ENCODE measurements at regions of chr4 and their contacts with region 1.

Region 1: DNA sequence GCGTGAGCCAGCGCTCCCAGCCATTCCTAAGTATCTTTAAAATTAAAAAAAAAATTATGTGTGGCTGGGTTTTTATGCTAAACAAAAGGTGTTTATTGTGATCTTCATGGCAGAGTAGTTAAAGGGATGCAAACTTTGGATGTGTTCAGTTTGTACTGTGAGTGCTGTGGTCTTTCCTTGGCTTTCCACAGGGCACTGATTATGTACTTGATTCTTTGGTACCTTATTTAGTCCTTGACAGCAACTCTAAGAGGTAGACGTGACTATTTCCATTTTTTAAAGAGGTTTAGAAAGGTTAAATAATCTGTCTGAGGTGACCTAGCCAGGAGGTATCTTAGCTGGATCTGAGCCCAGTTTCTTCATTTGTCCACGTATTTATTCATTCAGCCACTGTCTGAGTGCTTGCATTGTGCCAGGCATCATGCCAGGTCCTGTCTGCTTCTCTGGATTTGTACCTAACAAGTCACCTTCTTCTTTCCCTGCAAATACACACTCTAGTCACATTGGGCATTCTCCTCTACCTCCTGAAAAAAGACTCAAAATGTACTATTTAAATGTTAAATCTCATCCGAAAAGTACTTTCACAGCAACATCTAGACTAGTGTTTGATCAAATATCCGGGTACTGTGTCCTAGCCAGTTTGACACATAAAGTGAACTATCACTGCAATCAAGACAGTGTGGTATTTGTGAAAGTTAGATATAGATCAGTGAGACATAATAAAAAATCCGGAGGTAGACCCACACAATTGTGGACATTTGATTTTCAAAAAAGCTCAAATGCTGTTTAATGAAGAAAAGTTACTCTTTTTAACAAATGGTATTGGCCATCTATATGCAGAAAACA is 31.5 kb downstream of the WWC2 start:
- DNase-seq: peak; percentile 74
- H3K4me3 ChIP-seq: no peak overlapping the region
- H3K27ac ChIP-seq: peak overlapping the region in 3 of 4 donors; percentile 51 to 70 (median 68)
- H3K4me1 ChIP-seq: peaks cover 0 to 52% (median 33%) of the 10 kb centered on the region in 4 donors
- H3K27me3 ChIP-seq: no peaks in the 10 kb centered on the region
- CTCF ChIP-seq: no peak
- EP300 ChIP-seq: no peak
- POLR2A ChIP-seq: no peak

Region 2: GRCh38 chr4:182826391-182826790 is 304.2 kb before region 1 on chr4:
- intact Hi-C with region 1: no loop called
- DNase-seq: no peak
- H3K4me3 ChIP-seq: no peak overlapping the region
- H3K27ac ChIP-seq: no peak overlapping the region
- H3K4me1 ChIP-seq: no peaks in the 10 kb centered on the region
- H3K27me3 ChIP-seq: no peaks in the 10 kb centered on the region
- CTCF ChIP-seq: no peak
- EP300 ChIP-seq: no peak
- POLR2A ChIP-seq: no peak

Region 3: GRCh38 chr4:183118585-183118984 is 12.0 kb before region 1 on chr4:
- intact Hi-C with region 1: loop called (anchors 1 kb)
- DNase-seq: no peak
- H3K4me3 ChIP-seq: no peak overlapping the region
- H3K27ac ChIP-seq: peak overlapping the region in 3 of 4 donors; percentile 19 to 59 (median 27)
- H3K4me1 ChIP-seq: peaks cover 0 to 29% (median 17%) of the 10 kb centered on the region in 4 donors
- H3K27me3 ChIP-seq: no peaks in the 10 kb centered on the region
- CTCF ChIP-seq: no peak
- EP300 ChIP-seq: no peak
- POLR2A ChIP-seq: no peak

Region 4: DNA sequence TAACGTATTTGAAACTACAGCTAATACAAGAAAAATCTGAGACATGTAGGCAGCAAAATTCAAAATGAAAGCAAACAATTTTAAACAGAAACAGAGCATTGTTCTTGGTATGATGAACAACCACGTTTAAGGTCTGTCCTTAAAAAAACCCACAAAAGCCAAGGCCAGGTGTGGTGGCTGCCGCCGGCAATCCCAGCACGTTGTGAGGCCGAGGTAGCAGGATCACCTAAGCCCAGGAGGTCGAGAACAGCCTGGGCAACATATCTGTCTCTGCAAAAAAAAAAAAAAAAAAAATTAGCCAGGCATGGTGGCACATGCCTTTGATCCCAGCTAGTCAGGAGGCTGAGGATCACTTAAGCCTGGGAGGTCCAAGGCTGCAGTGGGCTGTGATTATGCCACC is 514.8 kb after region 1 on chr4:
- intact Hi-C with region 1: no loop called
- DNase-seq: no peak
- H3K4me3 ChIP-seq: no peak overlapping the region
- H3K27ac ChIP-seq: no peak overlapping the region
- H3K4me1 ChIP-seq: no peaks in the 10 kb centered on the region
- H3K27me3 ChIP-seq: no peaks in the 10 kb centered on the region
- CTCF ChIP-seq: no peak
- EP300 ChIP-seq: no peak
- POLR2A ChIP-seq: no peak